H1 (cell line): ENCODE measurements at regions of chr21 and their contacts with region 1.

Region 1: DNA sequence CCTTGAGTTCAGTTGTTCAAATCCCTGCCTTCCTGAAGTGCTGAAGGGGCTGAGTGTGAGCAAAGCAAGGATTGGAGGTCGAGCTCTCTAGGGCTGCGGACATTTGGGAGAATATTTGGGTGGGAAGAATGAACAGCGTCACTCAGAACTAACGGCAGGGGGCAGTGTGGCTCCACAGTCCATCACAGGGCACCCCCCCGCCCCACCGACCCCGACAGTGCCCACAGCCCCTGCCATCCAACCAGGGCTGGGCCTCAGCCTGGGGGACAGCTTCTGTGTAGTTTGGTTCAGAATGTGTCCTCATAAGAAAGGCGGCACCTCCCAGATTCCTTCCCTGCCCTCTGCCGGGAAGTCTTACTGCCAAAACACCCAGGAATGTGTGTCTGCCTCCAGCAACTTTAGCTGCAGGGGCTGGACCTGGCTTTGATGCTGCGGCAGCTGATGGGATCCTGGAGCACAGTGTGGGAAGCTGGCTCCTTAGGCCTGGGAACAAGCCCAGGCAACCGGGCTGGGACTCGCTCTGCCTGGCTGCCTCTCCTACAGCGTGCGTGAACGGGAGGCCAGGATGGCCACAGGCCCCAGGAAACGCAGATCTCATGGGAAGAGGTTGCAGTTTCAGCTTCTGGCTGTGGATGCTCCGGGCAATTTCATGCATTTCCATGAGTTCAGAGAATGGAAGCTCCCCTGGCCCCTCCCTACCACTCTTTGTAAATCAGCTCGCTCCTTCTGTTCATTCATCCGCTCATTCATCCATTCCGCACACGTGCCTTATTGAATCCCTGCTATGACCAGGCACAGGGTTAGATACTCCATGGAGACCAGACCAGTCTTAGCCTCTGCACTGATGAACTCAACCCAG is 104.9 kb upstream of the TMPRSS2 start:
- DNase-seq: peak in 1 of 2 experiments; percentile 88
- H3K4me3 ChIP-seq: peak overlapping the region in 1 of 4 experiments; percentile 6; a peak in 1 of 8 replicates
- H3K27ac ChIP-seq: 0 out of 2 replicates have a peak overlapping the region, but pooled peaks have one; percentile 16
- H3K4me1 ChIP-seq: peaks cover 0 to 13% (median 10%) of the 10 kb centered on the region in 4 experiments; a peak in 5 of 7 replicates
- H3K27me3 ChIP-seq: peaks cover 0 to 2% (median under 1%) of the 10 kb centered on the region in 4 experiments; a peak in 1 of 7 replicates
- CTCF ChIP-seq: peak; percentile 66 to 82 (median 82)
- EP300 ChIP-seq: no peak
- POLR2A ChIP-seq: no peak
- RAD21 ChIP-seq: peak; percentile 86 to 87

Region 2: GRCh38 chr21:41369105-41369919 is 243.6 kb before region 1 on chr21:
- CTCF ChIA-PET with region 1: interaction called, 10 read pairs
- POLR2A ChIA-PET with region 1: no interaction called
- DNase-seq: peak in 1 of 2 experiments; percentile 80
- H3K4me3 ChIP-seq: peak overlapping the region; percentile 24 to 59 (median 44); a peak in 7 of 8 replicates
- H3K27ac ChIP-seq: no peak overlapping the region
- H3K4me1 ChIP-seq: peaks cover 0 to 15% (median 3%) of the 10 kb centered on the region in 4 experiments; a peak in 5 of 7 replicates
- H3K27me3 ChIP-seq: peaks cover 0 to 1% (median 0%) of the 10 kb centered on the region in 4 experiments; a peak in 1 of 7 replicates
- CTCF ChIP-seq: peak; percentile 40 to 50 (median 45)
- EP300 ChIP-seq: no peak
- POLR2A ChIP-seq: no peak
- RAD21 ChIP-seq: peak; percentile 54 to 56

Region 3: GRCh38 chr21:41570791-41571355 is 42.0 kb before region 1 on chr21:
- CTCF ChIA-PET with region 1: no interaction called
- POLR2A ChIA-PET with region 1: no interaction called
- DNase-seq: no peak
- H3K4me3 ChIP-seq: no peak overlapping the region
- H3K27ac ChIP-seq: no peak overlapping the region
- H3K4me1 ChIP-seq: no peaks in the 10 kb centered on the region
- H3K27me3 ChIP-seq: peaks cover 0 to 2% (median 0%) of the 10 kb centered on the region in 4 experiments; a peak in 2 of 7 replicates
- CTCF ChIP-seq: no peak
- EP300 ChIP-seq: no peak
- POLR2A ChIP-seq: no peak
- RAD21 ChIP-seq: no peak

Region 4: DNA sequence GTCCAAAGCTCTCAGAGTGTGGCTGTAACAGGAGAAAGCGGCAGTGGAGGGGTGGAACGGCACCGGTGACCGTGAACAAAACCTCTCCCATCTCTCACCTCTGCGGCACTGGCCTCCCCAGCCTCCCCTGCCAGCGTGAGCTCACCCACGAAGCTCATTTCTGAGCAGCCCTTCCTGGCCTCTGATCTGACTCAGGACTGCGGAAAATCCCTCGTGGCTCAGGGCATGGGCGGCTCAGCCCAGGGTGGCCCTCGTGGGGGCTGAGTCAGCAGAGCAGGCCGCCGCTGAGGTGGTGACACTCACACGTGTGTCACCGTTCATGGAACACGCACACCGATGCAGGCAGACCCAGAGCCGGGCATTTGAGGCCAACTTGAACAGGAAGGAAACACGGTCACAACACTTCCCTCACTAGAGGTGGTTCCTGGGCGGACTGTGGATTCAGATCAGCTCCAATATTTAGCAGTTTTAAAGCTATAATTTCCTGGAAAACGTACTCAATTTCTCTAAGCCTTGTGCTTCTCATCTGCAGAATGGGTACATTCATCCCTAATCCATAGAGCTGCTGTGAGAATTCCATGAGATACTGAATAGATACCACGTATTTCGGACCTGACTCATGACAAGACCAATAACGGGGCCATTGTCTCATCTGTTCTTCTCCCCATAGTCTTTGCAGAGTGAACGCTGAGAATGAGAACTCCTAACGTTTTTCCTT is 10.1 kb after region 1 on chr21:
- CTCF ChIA-PET with region 1: interaction called, 55 read pairs
- POLR2A ChIA-PET with region 1: interaction called, 3 read pairs
- DNase-seq: no peak
- H3K4me3 ChIP-seq: no peak overlapping the region
- H3K27ac ChIP-seq: no peak overlapping the region
- H3K4me1 ChIP-seq: no peaks in the 10 kb centered on the region
- H3K27me3 ChIP-seq: no peaks in the 10 kb centered on the region
- CTCF ChIP-seq: no peak
- EP300 ChIP-seq: no peak
- POLR2A ChIP-seq: no peak
- RAD21 ChIP-seq: no peak

Region 5: DNA sequence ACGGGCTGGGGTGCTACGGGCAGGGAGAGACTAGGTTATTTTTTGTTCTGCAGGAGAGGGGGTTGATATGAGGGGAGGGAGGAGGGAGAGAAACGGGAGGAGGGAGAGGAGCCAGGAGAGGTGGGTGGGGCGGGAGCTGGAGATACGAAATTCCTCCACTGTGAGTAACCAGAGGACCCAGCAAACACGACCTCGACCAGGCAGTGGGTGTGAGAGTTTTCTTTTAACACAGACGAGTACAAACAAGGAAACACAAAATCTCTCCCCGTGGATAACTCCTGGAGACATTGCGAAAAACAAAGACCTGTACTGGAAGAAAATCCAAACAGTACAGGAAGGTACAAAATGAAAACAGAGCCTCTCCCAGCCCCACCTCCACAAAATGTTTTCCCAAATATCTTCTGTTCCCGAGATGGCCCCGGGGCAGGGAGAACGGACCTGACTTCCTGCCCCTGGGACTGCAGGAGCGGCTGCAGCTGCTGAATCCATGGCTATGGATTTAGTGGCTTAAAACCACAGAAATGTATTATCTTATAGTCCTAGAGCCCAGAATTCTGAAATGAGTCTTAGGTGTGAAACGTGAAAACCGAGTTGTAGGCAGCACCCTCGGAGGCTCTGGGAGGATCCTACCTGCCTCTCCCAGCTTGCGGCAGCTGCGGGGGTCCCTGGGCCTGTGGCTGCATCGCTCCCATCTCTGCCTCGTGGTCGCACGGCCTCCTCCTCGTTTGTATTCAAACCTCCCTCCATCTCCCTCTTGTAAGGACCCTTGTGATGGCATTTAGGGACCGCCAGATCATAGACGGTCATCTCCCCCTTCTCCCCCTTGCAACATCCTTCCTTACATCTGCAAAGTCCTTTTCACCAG is 71.7 kb after region 1 on chr21:
- CTCF ChIA-PET with region 1: interaction called, 15 read pairs
- POLR2A ChIA-PET with region 1: no interaction called
- DNase-seq: no peak
- H3K4me3 ChIP-seq: no peak overlapping the region
- H3K27ac ChIP-seq: no peak overlapping the region
- H3K4me1 ChIP-seq: peaks cover 0 to 8% (median 0%) of the 10 kb centered on the region in 4 experiments; a peak in 2 of 7 replicates
- H3K27me3 ChIP-seq: no peaks in the 10 kb centered on the region; a peak in 1 of 7 replicates
- CTCF ChIP-seq: no peak
- EP300 ChIP-seq: no peak
- POLR2A ChIP-seq: no peak
- RAD21 ChIP-seq: no peak

Region 6: GRCh38 chr21:41761211-41762181 is 148.6 kb after region 1 on chr21:
- CTCF ChIA-PET with region 1: interaction called, 118 read pairs
- POLR2A ChIA-PET with region 1: interaction called, 3 read pairs
- DNase-seq: no peak
- H3K4me3 ChIP-seq: peak overlapping the region; percentile 30 to 63 (median 52); a peak in 7 of 8 replicates
- H3K27ac ChIP-seq: peak overlapping the region; percentile 40; the same call in 1 of the 2 replicates
- H3K4me1 ChIP-seq: peaks cover 31 to 54% (median 35%) of the 10 kb centered on the region in 4 experiments
- H3K27me3 ChIP-seq: peaks cover 21 to 54% (median 45%) of the 10 kb centered on the region in 4 experiments
- CTCF ChIP-seq: no peak
- EP300 ChIP-seq: no peak
- POLR2A ChIP-seq: no peak
- RAD21 ChIP-seq: no peak

Region 7: GRCh38 chr21:41792711-41793110 is 179.8 kb after region 1 on chr21:
- CTCF ChIA-PET with region 1: interaction called, 12 read pairs
- POLR2A ChIA-PET with region 1: no interaction called
- DNase-seq: no peak
- H3K4me3 ChIP-seq: no peak overlapping the region
- H3K27ac ChIP-seq: no peak overlapping the region
- H3K4me1 ChIP-seq: peaks cover 0 to 3% (median 1%) of the 10 kb centered on the region in 4 experiments; a peak in 2 of 7 replicates
- H3K27me3 ChIP-seq: no peaks in the 10 kb centered on the region
- CTCF ChIP-seq: no peak
- EP300 ChIP-seq: no peak
- POLR2A ChIP-seq: no peak
- RAD21 ChIP-seq: no peak

Region 8: GRCh38 chr21:41847066-41847804 is 234.3 kb after region 1 on chr21:
- CTCF ChIA-PET with region 1: interaction called, 25 read pairs
- POLR2A ChIA-PET with region 1: no interaction called
- DNase-seq: peak in 1 of 2 experiments; percentile 54
- H3K4me3 ChIP-seq: no peak overlapping the region
- H3K27ac ChIP-seq: no peak overlapping the region
- H3K4me1 ChIP-seq: peaks cover 0 to 2% (median 0%) of the 10 kb centered on the region in 4 experiments; a peak in 1 of 7 replicates
- H3K27me3 ChIP-seq: no peaks in the 10 kb centered on the region
- CTCF ChIP-seq: peak; percentile 55 to 65 (median 62)
- EP300 ChIP-seq: no peak
- POLR2A ChIP-seq: no peak
- RAD21 ChIP-seq: peak; percentile 61